Activated T-helper 1 cell treated with anti-CD3 and anti-CD28 coated beads, Interleukin-12 subunit alpha, Interleukin-12 subunit beta, Interleukin-2, Interleukin-4 antibody, amounts not matched to agents 30 ng/mL and 10 ng/mL and 1 ng/mL, durations not matched to agents 14 hours and 24 hours and 36 hours (primary cell): ENCODE measurements at regions of chr5 and their contacts with region 1.

Region 1: DNA sequence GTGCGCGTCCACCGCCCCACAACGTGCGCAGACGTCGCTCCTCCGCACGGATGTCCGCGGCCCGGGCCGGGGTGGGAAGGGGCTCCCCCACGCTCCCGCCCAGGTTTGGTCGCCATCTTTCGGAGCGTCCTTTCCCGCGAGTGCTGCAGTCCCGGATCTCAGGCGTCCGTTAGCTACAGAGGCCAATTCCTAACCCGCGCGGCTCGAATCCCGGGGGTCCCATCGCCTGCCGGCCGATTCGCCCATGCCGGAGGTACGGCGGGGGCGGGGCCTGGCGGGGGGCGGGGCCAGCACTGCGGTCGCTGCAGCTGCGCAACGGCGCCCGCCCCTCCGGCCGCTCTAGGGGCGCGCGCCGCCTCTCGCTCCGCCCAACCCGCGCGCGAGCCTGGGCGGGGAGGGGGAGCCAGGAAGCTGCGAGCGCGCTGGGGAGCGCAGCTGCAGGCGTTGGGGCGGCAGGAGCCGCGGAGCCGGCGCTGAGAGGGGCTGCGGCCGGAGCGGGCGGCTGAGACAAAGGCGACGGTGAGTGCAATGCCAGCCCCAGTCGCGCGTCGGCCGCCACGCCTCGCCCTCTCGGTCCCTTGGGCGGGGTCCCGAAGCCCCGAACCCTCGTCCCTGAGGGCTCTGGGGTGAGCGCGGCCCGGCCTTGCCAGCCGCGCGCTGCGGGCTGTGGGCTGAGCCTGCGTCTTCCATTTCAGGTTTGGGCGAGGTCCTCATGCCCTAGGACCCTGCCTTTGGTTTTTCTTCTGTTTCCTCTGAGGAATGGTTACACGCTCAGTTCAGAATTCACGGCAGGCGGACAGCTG is at the start of gene CDC42SE2:
- DNase-seq: peak; percentile 84
- H3K4me3 Mint-ChIP-seq: peak within 1 kb of the TSS; percentile 84
- H3K27ac Mint-ChIP-seq: peak within 1 kb of the TSS; percentile 92
- H3K4me1 Mint-ChIP-seq: peaks cover 48% of the 10 kb centered on the region
- H3K27me3 Mint-ChIP-seq: no peaks in the 10 kb centered on the region
- total RNA-seq, gene CDC42SE2: 100.0 and 103 TPM in 2 replicates

Region 2: GRCh38 chr5:130795037-130795436 is 468.8 kb before region 1 on chr5:
- intact Hi-C with region 1: no loop called
- DNase-seq: no peak
- H3K4me3 Mint-ChIP-seq: no peak overlapping the region
- H3K27ac Mint-ChIP-seq: no peak overlapping the region
- H3K4me1 Mint-ChIP-seq: no peaks in the 10 kb centered on the region
- H3K27me3 Mint-ChIP-seq: peaks cover 2% of the 10 kb centered on the region

Region 3: DNA sequence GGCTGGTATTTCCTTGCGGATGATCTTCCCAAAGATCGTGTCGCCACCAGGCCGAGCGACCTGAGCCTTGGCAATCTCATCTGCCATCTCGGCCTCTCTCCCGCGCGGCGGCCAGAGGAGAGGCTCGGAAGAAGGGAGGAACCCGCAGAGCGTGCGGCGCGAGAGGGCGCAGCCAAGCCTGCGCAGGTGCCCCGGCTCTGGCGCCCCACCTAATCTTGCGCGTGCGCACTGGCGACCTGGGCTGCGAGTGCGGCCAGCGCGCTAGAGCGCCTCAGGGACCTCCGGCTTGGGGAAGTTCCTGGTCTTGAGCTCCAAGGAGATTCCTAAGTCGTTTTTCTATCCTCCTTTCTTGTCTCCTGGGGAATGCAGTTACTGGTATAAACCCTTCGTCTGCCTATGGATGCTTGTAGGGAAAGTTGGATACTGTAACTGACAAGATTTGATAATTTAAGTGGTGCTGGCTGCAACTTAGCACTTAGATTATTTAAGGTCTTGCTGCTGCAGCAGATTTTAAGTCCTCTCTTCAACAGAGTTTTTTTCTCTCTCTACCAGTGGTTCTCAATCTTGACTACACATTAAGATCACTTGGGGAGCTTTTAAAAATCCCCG is 98.6 kb before region 1 on chr5 and contains the start of gene HINT1:
- intact Hi-C with region 1: loop called (anchors 1 kb)
- DNase-seq: peak; percentile 93
- H3K4me3 Mint-ChIP-seq: peak within 1 kb of the TSS; percentile 99
- H3K27ac Mint-ChIP-seq: peak within 1 kb of the TSS; percentile 99
- H3K4me1 Mint-ChIP-seq: peaks cover 55% of the 10 kb centered on the region
- H3K27me3 Mint-ChIP-seq: peaks cover 2% of the 10 kb centered on the region
- total RNA-seq, gene HINT1: 249 and 262 TPM in 2 replicates

Region 4: GRCh38 chr5:131170540-131171275 is 93.1 kb before region 1 on chr5 and contains the start of gene LYRM7:
- intact Hi-C with region 1: loop called (anchors 1 kb)
- DNase-seq: peak; percentile 96
- H3K4me3 Mint-ChIP-seq: peak within 1 kb of the TSS; percentile 99
- H3K27ac Mint-ChIP-seq: peak within 1 kb of the TSS; percentile 98
- H3K4me1 Mint-ChIP-seq: peaks cover 51% of the 10 kb centered on the region
- H3K27me3 Mint-ChIP-seq: no peaks in the 10 kb centered on the region
- total RNA-seq, gene LYRM7: 13.7 and 15.8 TPM in 2 replicates

Region 5: GRCh38 chr5:131281133-131281867 is 17.5 kb after region 1 on chr5:
- intact Hi-C with region 1: loop called (anchors 1 kb)
- DNase-seq: no peak
- H3K4me3 Mint-ChIP-seq: peak overlapping the region; percentile 86
- H3K27ac Mint-ChIP-seq: peak overlapping the region; percentile 91
- H3K4me1 Mint-ChIP-seq: peaks cover 78% of the 10 kb centered on the region
- H3K27me3 Mint-ChIP-seq: peaks cover 5% of the 10 kb centered on the region